K562 (cell line): ENCODE measurements at regions of chr2 and their contacts with region 1.

Region 1: GRCh38 chr2:55419679-55420438 is at the start of gene CCDC88A:
- DNase-seq: peak; percentile 91 to 99 (median 92)
- ATAC-seq: peak; percentile 87
- H3K4me3 ChIP-seq: peak within 1 kb of the TSS; percentile 91
- H3K27ac ChIP-seq: peak within 1 kb of the TSS; percentile 84
- H3K4me1 ChIP-seq: peaks cover 4 to 9% of the 10 kb centered on the region in 2 experiments
- H3K27me3 ChIP-seq: no peaks in the 10 kb centered on the region; a peak in 1 of 5 replicates
- CTCF ChIP-seq: peak; percentile 13 to 27 (median 14); a peak in 1 of 6 replicates
- EP300 ChIP-seq: peak; percentile 70
- POLR2A ChIP-seq: peak; percentile 94
- RAD21 ChIP-seq: peak; percentile 36 to 38; a peak in 2 of 4 replicates
- polyA plus RNA-seq, gene CCDC88A: 29.3 to 30.3 TPM

Region 2: DNA sequence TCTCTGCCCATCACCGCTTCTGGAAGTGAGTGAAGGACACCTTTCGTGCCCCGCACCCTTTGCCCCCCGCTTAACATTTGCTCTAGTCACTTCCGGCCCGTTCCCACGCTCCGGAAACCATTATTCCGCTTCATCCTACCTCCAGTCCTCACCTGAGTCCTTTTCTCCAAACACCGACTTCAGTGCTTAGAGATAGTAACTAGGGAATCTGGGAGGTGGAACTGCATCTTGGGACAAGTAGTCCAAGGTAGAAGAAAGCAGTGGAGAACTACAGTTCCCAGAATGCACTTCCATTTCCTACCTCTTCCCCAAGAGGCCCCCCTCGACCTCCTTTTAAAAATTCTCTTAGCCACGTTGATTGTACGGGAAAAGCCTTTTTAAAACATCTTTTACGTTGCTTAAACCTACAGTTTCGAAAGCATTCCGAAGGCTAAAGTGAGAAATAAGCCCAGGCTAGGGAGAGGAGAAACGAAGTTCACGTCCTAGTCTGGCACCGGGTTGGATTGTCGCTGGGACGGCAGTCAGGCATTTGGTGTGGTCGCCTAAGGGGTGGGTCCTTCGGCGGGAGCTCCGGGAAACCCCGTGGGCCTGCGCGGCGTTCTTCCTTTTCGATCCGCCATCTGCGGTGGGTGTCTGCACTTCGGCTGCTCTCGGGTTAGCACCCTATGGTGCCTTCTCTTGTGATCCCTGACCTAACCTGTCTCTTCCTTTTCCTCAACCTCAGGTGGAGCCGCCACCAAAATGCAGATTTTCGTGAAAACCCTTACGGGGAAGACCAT is 187.6 kb before region 1 on chr2 and contains the starts of genes CLHC1 and RPS27A:
- CTCF ChIA-PET with region 1: no interaction called
- POLR2A ChIA-PET with region 1: no interaction called
- in situ Hi-C with region 1: no loop called
- intact Hi-C with region 1: loop called (anchors 5 kb)
- DNase-seq: peak; percentile 88 to 95 (median 89)
- ATAC-seq: peak; percentile 85
- H3K4me3 ChIP-seq: peak within 1 kb of the TSS; percentile 79
- H3K27ac ChIP-seq: peak within 1 kb of the TSS; percentile 99
- H3K4me1 ChIP-seq: peaks cover 21 to 37% of the 10 kb centered on the region in 2 experiments
- H3K27me3 ChIP-seq: no peaks in the 10 kb centered on the region
- CTCF ChIP-seq: no peak
- EP300 ChIP-seq: peak; percentile 12; the same call in 1 of the 2 replicates
- POLR2A ChIP-seq: peak; percentile 99
- RAD21 ChIP-seq: 0 out of 4 replicates have a peak, but pooled peaks have one; percentile 3 to 4
- polyA plus RNA-seq, gene CLHC1: 3.7 to 4.6 TPM
- polyA plus RNA-seq, gene RPS27A: 2,423 to 2,945 TPM

Region 3: DNA sequence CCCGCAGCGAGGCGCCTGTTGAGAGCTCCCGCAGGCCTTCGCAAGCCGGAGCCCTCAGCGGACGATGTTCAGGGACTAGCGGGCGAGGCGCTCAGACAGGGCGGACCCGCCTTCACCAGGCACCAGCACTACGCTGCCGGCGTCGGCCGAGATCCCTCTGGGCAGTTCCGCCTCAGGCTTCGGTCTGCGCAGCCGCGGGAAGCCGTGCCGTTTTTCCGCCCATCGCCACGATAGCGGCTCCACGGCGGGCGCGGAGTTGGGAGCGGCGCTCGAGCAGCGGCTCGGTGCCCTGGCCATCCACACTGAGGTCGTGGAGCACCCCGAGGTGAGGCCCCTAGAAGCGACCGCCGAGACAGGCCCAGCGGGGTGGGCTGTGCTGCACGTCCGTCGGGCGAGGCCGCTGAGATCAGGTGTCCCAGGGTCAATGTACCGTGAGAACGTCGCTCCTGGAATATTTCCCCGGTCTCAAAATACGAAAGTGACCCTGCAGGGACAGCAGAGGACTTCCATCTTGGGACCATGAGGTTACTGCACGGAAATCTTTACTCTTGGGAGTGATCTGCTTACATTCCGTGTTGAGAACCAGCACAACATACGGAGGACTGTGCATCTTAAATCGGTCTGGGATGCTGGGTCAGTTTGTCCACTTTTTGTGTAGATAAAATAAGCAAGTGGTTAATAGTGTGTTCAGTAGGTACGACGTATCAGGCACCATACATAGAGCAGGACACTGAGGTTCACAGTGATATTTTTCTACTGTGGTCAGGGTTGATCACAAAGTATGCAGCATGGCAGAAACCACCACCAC is 137.5 kb before region 1 on chr2:
- CTCF ChIA-PET with region 1: no interaction called
- POLR2A ChIA-PET with region 1: no interaction called
- in situ Hi-C with region 1: no loop called
- intact Hi-C with region 1: loop called (anchors 5 kb)
- DNase-seq: peak; percentile 78 to 91 (median 81)
- ATAC-seq: peak; percentile 95
- H3K4me3 ChIP-seq: peak overlapping the region; percentile 66
- H3K27ac ChIP-seq: peak overlapping the region; percentile 91
- H3K4me1 ChIP-seq: peaks cover 7 to 9% of the 10 kb centered on the region in 2 experiments; a peak in 3 of 5 replicates
- H3K27me3 ChIP-seq: no peaks in the 10 kb centered on the region
- CTCF ChIP-seq: no peak
- EP300 ChIP-seq: no peak
- POLR2A ChIP-seq: peak; percentile 95
- RAD21 ChIP-seq: no peak; a peak in 1 of 4 replicates

Region 4: DNA sequence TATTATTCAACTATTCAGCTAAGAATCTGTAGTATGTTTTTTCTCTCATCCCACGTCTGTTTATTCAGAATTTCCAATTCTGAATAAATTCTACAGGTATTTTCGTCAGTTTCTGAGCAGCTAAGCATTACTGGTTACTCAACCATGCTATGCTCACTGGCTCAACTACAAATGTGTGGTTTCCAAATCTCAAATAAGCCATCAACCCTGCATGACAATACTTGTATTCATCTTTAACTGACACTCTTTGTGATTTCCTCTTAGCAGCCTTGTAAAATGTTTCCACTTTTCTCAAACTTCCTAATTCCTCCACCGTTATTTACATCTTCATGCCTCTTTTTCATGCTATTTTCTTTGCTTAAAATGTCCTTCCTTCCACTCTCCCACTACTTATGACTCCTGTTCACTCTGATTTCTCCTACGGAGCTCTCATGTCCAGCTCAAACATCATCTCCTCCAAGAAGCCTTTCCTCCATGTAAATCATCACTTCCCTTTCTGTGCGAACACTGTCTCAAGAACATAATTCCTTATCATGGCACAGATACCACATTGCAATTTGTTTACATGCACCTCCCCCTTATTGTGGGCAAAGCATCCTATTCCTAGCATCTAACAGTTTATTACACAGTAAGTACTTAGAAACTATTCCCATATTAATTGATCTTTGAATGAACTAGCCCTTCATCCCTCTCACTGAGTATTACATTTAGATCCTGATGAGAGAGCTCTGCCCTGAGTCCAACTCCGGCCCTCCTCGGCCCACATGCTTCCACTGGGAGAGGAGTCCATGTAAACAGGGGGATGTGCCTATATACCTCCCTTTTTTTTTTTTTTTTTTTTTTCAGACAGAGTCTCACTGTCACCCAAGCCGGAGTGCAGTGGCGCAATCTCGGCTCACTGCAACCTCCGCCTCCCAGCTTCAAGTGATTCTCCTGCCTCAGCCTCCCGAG is 10.7 kb before region 1 on chr2:
- CTCF ChIA-PET with region 1: no interaction called
- POLR2A ChIA-PET with region 1: interaction called, 14 read pairs
- in situ Hi-C with region 1: no loop called
- intact Hi-C with region 1: no loop called
- DNase-seq: no peak
- ATAC-seq: no peak
- H3K4me3 ChIP-seq: no peak overlapping the region
- H3K27ac ChIP-seq: no peak overlapping the region
- H3K4me1 ChIP-seq: peaks cover 0 to 2% of the 10 kb centered on the region in 2 experiments; a peak in 1 of 5 replicates
- H3K27me3 ChIP-seq: no peaks in the 10 kb centered on the region
- CTCF ChIP-seq: no peak
- EP300 ChIP-seq: no peak
- POLR2A ChIP-seq: no peak
- RAD21 ChIP-seq: no peak

Region 5: DNA sequence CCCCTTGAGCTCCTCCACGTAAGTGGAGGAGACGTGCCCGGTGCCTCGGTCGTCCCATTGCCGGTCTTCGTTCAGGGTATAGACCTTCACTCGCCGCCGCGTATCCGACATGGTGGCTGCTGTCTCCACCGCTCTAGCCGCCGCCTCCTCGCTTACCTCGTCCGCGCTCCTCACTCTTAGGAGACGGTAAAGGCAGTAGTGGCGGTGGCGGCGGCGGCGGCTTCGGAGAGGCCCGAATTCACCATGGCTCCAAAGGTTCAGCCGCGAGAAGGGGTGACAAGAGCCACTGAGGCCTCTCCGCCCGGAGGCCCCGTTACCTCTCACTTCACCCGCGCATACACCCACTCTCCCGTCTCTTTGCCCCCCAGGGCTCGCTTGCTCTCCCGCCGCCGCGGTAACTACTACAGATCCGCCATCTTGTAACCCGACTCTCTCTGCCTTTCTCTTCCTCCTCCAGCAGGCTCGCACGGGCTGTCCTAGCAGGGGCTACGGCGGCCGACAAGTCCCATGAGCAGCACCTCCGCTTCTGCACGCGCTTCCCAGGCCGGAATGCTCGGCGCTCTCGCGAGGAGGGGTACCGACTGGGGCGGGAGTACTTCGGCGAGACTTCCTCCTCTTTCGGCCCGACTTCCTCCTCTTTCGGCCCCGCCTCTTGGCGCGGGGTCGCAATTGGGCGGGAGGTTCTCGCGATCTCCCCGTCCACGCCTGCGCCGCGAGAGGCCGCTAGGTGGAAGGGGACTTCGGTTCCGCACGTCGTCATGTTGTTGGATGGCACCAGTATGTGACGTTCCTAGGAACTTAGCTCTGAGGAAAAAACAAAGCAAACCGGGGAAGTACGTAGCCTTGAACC is 197.5 kb after region 1 on chr2 and contains the start of gene PPP4R3B:
- CTCF ChIA-PET with region 1: no interaction called
- POLR2A ChIA-PET with region 1: no interaction called
- in situ Hi-C with region 1: no loop called
- intact Hi-C with region 1: loop called (anchors 5 kb)
- DNase-seq: peak; percentile 89 to 99 (median 94)
- ATAC-seq: peak; percentile 86
- H3K4me3 ChIP-seq: peak within 1 kb of the TSS; percentile 98
- H3K27ac ChIP-seq: peak within 1 kb of the TSS; percentile 99
- H3K4me1 ChIP-seq: peaks cover 6 to 8% of the 10 kb centered on the region in 2 experiments; a peak in 4 of 5 replicates
- H3K27me3 ChIP-seq: no peaks in the 10 kb centered on the region
- CTCF ChIP-seq: peak; percentile 21 to 49 (median 48); a peak in 3 of 6 replicates
- EP300 ChIP-seq: no peak
- POLR2A ChIP-seq: peak; percentile 95
- RAD21 ChIP-seq: no peak
- polyA plus RNA-seq, gene PPP4R3B: 13.2 to 15.7 TPM